ENCODE measurements at regions of chr16 and their contacts with region 1.

Region 1: DNA sequence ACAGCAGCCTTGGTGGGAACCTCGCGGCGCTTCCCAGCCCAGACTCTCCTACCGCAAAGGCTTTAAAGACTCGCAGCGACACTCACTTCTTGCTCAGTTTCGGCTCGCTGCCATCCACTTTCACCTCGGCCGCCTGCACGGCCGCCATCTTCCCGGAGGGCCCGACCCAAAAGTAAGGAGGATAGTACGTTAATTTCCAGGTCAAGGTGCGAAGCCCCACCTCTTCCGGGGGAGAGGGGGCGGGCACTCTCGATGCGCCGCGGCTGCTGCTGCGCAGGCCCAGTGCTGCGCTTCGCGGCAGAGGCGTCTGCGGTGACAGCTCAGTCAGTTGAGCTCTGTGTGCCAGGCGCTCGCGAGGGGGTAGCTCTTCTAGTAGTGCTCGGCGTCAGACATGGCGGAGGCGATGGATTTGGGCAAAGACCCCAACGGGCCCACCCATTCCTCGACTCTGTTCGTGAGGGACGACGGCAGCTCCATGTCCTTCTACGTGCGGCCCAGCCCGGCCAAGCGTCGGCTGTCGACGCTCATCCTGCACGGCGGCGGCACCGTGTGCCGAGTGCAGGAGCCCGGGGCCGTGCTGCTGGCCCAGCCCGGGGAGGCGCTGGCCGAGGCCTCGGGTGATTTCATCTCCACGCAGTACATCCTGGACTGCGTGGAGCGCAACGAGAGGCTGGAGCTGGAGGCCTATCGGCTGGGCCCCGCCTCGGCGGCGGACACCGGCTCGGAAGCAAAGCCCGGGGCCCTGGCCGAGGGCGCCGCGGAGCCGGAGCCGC is at the starts of genes KARS1 and TERF2IP:
- DNase-seq: peak; percentile 96
- ATAC-seq: peak; percentile 93
- H3K4me3 Mint-ChIP-seq: peak within 1 kb of the TSS; percentile 98
- H3K27ac Mint-ChIP-seq: peak within 1 kb of the TSS; percentile 97
- H3K4me1 Mint-ChIP-seq: peaks cover 61% of the 10 kb centered on the region
- H3K27me3 Mint-ChIP-seq: no peaks in the 10 kb centered on the region
- total RNA-seq, gene KARS1: 208 TPM
- total RNA-seq, gene TERF2IP: 61.4 to 63.2 TPM

Region 2: GRCh38 chr16:75452464-75453190 is 195.1 kb before region 1 on chr16:
- CTCF ChIA-PET with region 1: no interaction called
- POLR2A ChIA-PET with region 1: no interaction called
- DNase-seq: no peak
- ATAC-seq: no peak
- H3K4me3 Mint-ChIP-seq: no peak overlapping the region
- H3K27ac Mint-ChIP-seq: no peak overlapping the region
- H3K4me1 Mint-ChIP-seq: peaks cover 2% of the 10 kb centered on the region
- H3K27me3 Mint-ChIP-seq: no peaks in the 10 kb centered on the region

Region 3: GRCh38 chr16:75555707-75556430 is 91.8 kb before region 1 on chr16 and contains the start of gene TMEM231:
- CTCF ChIA-PET with region 1: interaction called, 3 read pairs
- POLR2A ChIA-PET with region 1: interaction called, 11 read pairs
- DNase-seq: peak; percentile 98
- ATAC-seq: peak; percentile 96
- H3K4me3 Mint-ChIP-seq: peak within 1 kb of the TSS; percentile 84
- H3K27ac Mint-ChIP-seq: peak within 1 kb of the TSS; percentile 73
- H3K4me1 Mint-ChIP-seq: peaks cover 9% of the 10 kb centered on the region
- H3K27me3 Mint-ChIP-seq: peaks cover 19% of the 10 kb centered on the region
- total RNA-seq, gene TMEM231: 2.1 to 2.3 TPM

Region 4: DNA sequence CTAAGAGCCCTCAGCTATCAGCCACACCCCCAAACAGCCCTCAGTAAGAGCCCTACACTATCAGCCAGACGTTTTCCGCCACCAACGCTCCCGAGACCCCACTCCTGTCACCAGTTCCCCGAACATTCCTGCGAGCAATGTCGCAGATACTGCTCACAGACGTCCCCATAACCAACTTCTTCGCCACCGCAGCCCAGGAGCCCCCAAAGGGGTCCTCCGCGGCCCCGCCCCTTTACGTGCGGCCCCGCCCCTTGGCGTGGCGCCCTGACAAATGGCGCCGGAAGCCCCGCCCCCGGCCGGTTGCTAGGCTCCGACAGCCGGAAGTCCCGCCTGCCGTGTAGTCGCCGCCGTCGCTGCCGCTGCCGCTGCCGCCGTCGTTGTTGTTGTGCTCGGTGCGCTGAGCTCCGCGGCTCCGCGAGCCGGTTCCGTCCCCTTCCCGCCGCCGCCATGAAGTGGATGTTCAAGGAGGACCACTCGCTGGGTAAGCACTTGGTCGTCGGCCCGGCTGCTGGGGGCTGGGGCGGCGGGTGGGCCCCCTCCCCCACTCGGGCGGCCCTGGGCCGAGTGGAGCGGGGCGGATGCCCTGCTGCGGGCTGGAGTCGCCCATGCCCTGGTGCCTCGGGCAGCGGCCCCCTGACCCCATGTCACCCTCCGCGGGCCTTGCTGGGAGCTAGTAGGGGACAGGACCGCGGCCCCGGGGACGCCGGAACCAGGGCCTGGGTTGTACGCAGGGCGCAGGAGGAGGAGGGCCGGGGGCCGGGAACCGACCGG is 81.5 kb before region 1 on chr16 and contains the start of gene GABARAPL2:
- CTCF ChIA-PET with region 1: interaction called, 3 read pairs
- POLR2A ChIA-PET with region 1: interaction called, 19 read pairs
- DNase-seq: peak; percentile 92
- ATAC-seq: peak; percentile 79
- H3K4me3 Mint-ChIP-seq: peak within 1 kb of the TSS; percentile 97
- H3K27ac Mint-ChIP-seq: peak within 1 kb of the TSS; percentile 90
- H3K4me1 Mint-ChIP-seq: peaks cover 39% of the 10 kb centered on the region
- H3K27me3 Mint-ChIP-seq: peaks cover 14% of the 10 kb centered on the region
- total RNA-seq, gene GABARAPL2: 57.3 to 59.6 TPM

Region 5: GRCh38 chr16:75622761-75623605 is 24.7 kb before region 1 on chr16 and contains the start of gene ADAT1:
- CTCF ChIA-PET with region 1: interaction called, 25 read pairs
- POLR2A ChIA-PET with region 1: interaction called, 88 read pairs
- DNase-seq: peak; percentile 99
- ATAC-seq: peak; percentile 95
- H3K4me3 Mint-ChIP-seq: peak within 1 kb of the TSS; percentile 93
- H3K27ac Mint-ChIP-seq: peak within 1 kb of the TSS; percentile 98
- H3K4me1 Mint-ChIP-seq: peaks cover 38% of the 10 kb centered on the region
- H3K27me3 Mint-ChIP-seq: no peaks in the 10 kb centered on the region
- total RNA-seq, gene ADAT1: 51.8 to 51.9 TPM

Region 6: GRCh38 chr16:75632857-75633256 is 14.8 kb before region 1 on chr16:
- CTCF ChIA-PET with region 1: no interaction called
- POLR2A ChIA-PET with region 1: interaction called, 37 read pairs
- DNase-seq: no peak
- ATAC-seq: no peak
- H3K4me3 Mint-ChIP-seq: no peak overlapping the region
- H3K27ac Mint-ChIP-seq: no peak overlapping the region
- H3K4me1 Mint-ChIP-seq: peaks cover 31% of the 10 kb centered on the region
- H3K27me3 Mint-ChIP-seq: no peaks in the 10 kb centered on the region

Region 7: GRCh38 chr16:75764154-75764768 is 116.6 kb after region 1 on chr16:
- CTCF ChIA-PET with region 1: interaction called, 5 read pairs
- POLR2A ChIA-PET with region 1: interaction called, 10 read pairs
- DNase-seq: peak; percentile 74
- ATAC-seq: peak; percentile 96
- H3K4me3 Mint-ChIP-seq: no peak overlapping the region
- H3K27ac Mint-ChIP-seq: no peak overlapping the region
- H3K4me1 Mint-ChIP-seq: no peaks in the 10 kb centered on the region
- H3K27me3 Mint-ChIP-seq: peaks cover 14% of the 10 kb centered on the region